Posterior vena cava (tissue), 2 donors: ENCODE measurements at regions of chrX and their contacts with region 1.

Region 1: DNA sequence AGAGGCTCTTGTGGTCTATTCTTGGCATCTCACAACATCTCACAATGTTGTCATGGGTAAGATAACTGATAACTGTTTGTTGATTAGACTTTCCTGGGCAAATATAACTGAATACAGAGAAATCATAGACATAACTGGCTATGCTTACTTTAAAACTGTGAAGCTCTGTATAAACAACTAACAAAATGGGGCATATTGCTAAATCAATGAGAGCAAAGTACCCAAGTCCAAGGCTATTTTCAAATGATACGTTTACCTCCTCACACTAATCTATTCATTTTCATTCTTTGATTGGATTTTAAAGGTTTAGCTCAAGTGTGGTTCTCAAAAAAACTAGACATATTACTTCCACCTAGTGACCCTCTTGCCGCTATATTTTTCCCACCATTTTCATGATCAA is 38.6 kb downstream of the AMELX start:
- DNase-seq: no peak

Region 2: DNA sequence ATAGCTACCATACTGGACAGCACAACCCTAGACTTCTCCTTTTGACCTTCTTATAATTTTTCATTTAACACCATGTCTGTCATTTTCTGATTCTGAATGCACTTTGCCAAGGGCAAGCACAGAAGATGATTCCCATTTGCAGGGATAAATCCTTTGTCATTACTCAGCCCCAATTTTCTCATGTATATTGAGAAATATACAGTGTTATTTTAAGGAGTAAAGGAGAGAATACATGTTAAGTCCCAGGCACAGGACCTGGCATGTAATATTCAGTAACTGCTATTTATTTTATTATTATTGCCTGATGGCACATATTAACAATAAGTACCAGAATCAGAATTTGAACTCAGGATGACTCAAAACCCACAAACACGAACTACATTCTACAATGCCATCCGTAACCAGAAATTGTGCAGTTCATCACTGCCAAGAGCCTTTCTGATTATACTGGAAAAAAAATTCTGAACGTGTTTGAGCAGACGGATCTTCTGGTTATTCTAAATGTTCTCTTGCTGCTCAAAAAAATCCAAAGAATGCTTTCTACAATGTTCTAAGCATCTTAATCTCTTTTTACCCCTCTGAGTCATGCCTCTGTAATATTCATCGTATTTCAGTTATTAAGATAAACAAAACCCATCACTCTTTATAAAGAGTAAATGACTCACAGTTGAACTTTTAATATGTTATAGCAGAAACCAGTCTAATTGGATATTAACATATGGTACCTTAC is 881.4 kb before region 1 on chrX:
- intact Hi-C with region 1: no loop called
- DNase-seq: no peak

Region 3: DNA sequence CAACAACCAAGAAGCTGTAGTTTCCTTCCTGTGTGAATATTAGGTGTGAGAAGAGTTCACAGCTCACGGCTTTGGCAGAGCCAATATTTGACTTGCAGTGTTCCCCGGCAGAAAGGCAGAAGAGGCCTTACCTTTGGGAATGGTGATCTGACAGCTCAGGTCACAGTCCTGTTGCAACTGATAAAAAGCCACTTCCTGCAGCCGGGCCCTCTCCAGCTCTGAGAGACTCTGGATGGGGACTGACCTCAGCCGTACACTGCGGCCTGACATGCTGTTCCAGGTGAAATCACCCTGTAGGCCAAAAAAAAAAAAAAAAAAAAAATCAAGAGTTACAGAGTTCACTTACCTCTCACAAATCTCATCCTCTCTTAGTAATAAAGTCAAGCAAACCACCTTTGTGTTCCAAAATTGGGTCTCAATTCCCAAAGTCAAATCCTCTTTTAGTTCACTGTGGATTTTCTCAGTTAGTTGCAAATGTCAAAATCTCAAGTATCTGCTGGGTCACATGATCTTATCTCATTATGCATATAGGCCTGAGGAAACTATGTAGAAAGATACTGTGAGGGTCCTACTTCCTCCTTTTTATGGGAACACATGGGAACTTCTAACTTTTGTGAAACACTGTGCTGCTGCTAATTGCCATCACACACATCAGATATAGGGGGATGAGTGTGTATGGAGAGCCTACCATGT is 77.2 kb before region 1 on chrX:
- intact Hi-C with region 1: loop called in 1 of 2 experiments (anchors 2 kb)
- DNase-seq: no peak

Region 4: GRCh38 chrX:11589641-11590040 is 257.9 kb after region 1 on chrX:
- intact Hi-C with region 1: no loop called
- DNase-seq: no peak